HAP-1 (cell line): ENCODE measurements at regions of chr17 and their contacts with region 1.

Region 1: DNA sequence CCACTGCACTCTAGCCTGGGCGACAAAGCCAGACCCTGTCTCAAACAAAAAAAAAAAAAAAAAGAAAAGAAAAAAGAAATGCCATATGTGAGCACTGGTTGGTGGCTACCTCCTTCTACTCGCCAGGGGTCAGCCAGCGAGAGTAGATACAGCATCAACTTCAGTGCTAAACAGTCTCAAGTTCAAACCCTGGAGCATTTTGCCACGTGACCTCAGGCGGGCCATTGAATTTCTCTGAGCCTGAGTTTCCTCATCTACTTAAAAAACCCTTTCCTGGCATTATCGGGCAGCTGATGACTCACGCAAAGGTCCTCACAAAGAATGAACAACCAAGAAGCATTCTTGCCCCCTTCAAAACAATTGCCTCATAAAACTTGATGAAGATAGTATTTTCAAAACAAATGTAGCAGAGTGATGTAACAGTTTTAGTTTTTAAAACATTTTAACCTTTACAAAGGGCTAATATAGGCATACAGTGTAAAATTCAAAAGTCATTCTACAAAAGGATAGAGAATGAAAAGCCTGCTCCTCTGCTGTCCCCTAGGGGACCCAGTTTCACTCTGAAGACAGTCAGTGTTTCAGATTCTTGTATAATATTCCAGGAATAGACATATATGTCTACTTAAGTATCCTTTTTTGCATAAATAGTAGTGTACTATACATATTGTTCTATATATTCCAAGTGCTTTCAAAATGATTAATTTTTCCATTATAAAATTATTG is 28.4 kb downstream of the DNAH2 start:
- DNase-seq: peak; percentile 79 to 84
- H3K4me3 ChIP-seq: no peak overlapping the region
- H3K4me1 ChIP-seq: peaks cover 12% of the 10 kb centered on the region
- H3K27me3 ChIP-seq: no peaks in the 10 kb centered on the region

Region 2: GRCh38 chr17:7548585-7549400 is 197.1 kb before region 1 on chr17 and contains the start of gene TNFSF12:
- in situ Hi-C with region 1: no loop called
- DNase-seq: peak in 1 of 2 experiments; percentile 76
- H3K4me3 ChIP-seq: peak within 1 kb of the TSS; percentile 37
- H3K4me1 ChIP-seq: peaks cover 8% of the 10 kb centered on the region
- H3K27me3 ChIP-seq: no peaks in the 10 kb centered on the region

Region 3: DNA sequence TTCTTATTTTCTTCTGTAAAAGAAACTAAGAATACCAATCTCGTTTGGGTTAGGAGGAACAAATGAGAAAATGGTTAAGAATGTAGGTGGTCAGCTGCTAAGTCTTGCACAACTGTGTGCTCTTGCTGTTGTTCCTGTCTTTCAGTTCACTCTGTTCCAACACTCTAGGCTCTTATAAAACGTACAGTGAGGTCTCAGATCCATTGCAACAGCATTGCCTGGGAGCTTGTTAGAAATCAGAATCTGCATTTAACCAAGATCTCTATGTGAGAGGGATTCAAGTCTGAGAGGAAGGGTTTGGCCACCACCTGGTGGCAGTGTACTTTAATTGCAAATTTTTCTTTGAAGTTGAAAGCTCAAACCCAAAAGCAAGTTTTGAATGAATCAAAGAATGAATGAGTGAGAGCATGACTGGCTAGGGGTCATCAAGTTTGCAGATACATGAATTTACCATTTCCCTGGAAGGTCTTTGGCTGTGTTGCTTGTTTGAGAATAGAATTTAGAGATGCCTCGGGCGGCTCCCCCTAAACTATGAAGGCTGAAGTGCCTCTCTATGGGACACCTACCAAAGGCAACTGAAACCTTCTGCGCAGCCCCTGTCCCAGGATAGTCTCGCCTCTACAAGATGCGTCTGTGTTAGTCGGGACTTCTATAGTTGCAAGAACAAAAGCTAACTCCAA is 295.5 kb after region 1 on chr17:
- in situ Hi-C with region 1: loop called (anchors 10 kb)
- DNase-seq: peak; percentile 57 to 72
- H3K4me3 ChIP-seq: no peak overlapping the region
- H3K4me1 ChIP-seq: no peaks in the 10 kb centered on the region
- H3K27me3 ChIP-seq: no peaks in the 10 kb centered on the region